Adrenal gland (tissue), 19 donors: ENCODE measurements at regions of chr6 and their contacts with region 1.

Region 1: DNA sequence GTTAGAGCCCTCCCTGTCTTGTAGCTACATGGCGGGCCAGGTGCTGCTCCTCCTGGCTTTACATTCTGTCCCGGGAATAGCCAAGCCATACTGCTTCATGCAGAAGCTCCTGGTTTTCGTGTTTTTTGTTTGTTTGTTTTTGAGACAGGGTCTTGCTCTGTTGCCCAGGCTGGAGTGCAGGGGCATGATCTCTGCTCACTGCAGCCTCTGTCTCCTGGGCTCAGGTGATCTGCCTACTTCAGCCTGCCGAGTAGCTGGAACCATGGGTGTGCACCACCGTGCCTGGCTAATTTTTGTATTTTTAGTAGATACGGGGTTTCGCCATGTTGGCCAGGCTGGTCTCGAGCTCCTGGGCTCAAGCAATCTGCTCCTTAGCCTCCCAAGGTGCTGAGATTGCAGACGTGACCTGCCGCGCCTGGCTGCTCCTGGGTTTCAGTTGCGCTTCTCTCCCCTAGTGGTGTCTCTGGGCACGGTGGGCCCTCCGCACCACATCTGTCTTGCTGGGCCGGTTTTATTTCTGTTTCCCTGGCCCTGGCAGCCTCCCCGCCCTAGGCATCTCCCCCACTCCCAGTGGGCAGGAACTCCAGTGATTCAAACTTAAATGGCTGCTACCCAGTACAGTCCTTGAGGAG is 12.9 kb downstream of the CDYL start:
- DNase-seq: no peak
- H3K4me3 ChIP-seq: no peak overlapping the region
- H3K27ac ChIP-seq: no peak overlapping the region
- H3K4me1 ChIP-seq: peaks cover 0 to 4% of the 10 kb centered on the region in 2 donors
- H3K27me3 ChIP-seq: no peaks in the 10 kb centered on the region
- CTCF ChIP-seq: no peak
- POLR2A ChIP-seq: no peak

Region 2: DNA sequence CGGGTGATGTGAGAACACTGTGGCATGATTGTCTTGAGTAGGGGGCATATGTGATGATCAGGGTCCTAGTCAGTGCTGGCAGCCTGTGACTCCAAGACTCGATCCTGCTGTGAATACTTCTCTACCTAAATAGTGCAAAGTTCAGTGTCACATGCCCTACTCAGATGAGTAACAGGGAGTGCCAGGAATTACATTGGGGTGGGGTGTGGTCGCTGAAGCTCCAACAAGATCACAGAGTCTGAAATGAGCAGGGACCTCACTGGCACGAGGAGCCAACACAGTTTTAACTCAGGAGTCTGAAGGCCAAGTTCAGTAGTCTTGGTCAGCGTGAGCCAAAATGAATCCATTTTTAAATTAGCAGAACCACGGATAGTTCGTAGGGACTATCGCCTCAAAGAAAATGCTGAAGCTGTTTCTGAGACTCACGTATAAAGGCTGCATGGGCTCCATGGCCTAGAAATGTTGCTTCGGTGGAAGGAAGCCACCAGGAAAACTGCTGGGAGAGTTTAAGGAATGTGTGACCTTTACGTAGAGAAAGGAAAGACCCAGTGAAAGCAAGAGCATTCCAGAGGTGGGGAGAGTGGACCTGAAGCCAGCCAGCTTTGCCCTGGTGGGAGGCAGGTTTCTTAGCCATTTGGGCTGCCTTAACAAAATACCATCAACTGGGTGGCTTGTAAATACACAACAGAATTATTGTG is 142.6 kb after region 1 on chr6:
- intact Hi-C with region 1: loop called in 1 of 2 experiments (anchors 5 kb)
- DNase-seq: no peak
- H3K4me3 ChIP-seq: no peak overlapping the region
- H3K27ac ChIP-seq: no peak overlapping the region
- H3K4me1 ChIP-seq: peaks cover 0 to 17% of the 10 kb centered on the region in 2 donors
- H3K27me3 ChIP-seq: no peaks in the 10 kb centered on the region
- CTCF ChIP-seq: no peak
- POLR2A ChIP-seq: no peak